ENCODE measurements at regions of chr12 and their contacts with region 1.

Region 1: GRCh38 chr12:92608151-92609091 is 94.4 kb upstream of the PLEKHG7 start:
- DNase-seq: peak in 2 of 5 donors; percentile 4 to 27
- H3K4me3 ChIP-seq: no peak overlapping the region
- H3K4me3 Mint-ChIP-seq: peak overlapping the region in 5 of 8 donors; percentile 22 to 64 (median 41)
- H3K27ac ChIP-seq: no peak overlapping the region
- H3K27ac Mint-ChIP-seq: peak overlapping the region in 6 of 7 donors; percentile 4 to 88 (median 71)
- H3K4me1 ChIP-seq: peaks cover 8% of the 10 kb centered on the region
- H3K4me1 Mint-ChIP-seq: peaks cover 10 to 11% (median 10%) of the 10 kb centered on the region in 4 donors
- H3K27me3 ChIP-seq: no peaks in the 10 kb centered on the region
- H3K27me3 Mint-ChIP-seq: no peaks in the 10 kb centered on the region

Region 2: GRCh38 chr12:92593734-92594402 is 14.6 kb before region 1 on chr12:
- CTCF ChIA-PET with region 1: interaction called, 13 read pairs
- POLR2A ChIA-PET with region 1: interaction called, 18 read pairs
- intact Hi-C with region 1: loop called (anchors 1 kb)
- DNase-seq: peak; percentile 87 to 97 (median 94)
- H3K4me3 ChIP-seq: peak overlapping the region in 1 of 2 donors; percentile 37
- H3K4me3 Mint-ChIP-seq: peak overlapping the region in 7 of 8 donors; percentile 43 to 88 (median 71)
- H3K27ac ChIP-seq: peak overlapping the region; percentile 91
- H3K27ac Mint-ChIP-seq: peak overlapping the region; percentile 86 to 100 (median 100)
- H3K4me1 ChIP-seq: peaks cover 35% of the 10 kb centered on the region
- H3K4me1 Mint-ChIP-seq: peaks cover 27 to 38% (median 35%) of the 10 kb centered on the region in 4 donors
- H3K27me3 ChIP-seq: no peaks in the 10 kb centered on the region
- H3K27me3 Mint-ChIP-seq: no peaks in the 10 kb centered on the region